ENCODE measurements at regions of chr10 and their contacts with region 1.

Region 1: DNA sequence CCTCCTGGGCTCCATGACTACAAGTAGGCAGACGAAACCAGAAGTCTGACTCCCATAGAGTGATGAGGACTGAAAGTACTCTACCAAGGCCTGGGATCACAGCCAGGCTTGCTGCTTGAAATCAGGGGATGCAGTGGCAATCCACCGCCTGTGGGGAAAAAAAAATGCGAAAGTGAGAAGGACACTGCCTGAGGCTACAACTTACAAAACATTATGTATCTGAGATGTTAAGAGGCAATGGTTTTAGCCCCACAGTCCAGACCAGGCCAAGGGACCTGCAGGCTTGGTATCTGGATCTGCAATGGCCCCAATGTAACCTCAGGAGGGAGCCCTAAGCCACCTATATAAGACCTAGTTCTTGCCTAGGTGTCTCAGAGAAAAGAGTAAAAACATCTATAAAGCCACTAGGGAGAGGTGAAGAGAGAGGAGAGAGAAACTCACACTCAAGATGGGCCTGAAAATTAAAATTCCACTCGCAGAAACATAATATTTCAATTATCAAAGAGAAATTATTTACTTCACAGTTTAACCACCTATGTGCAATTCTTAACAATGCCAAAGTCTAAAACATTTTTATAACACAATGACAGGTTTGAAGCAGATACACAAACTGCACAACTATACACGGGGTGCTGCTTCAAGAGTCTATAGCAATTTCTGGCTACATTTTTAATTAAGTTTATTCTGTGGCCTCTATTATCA is 13.9 kb downstream of the DNAJC1 start:
- DNase-seq: peak in 1 of 3 donors; percentile 6
- H3K4me3 ChIP-seq: no peak overlapping the region
- H3K4me3 Mint-ChIP-seq: no peak overlapping the region
- H3K27ac ChIP-seq: no peak overlapping the region
- H3K27ac Mint-ChIP-seq: peak overlapping the region in 1 of 7 donors; percentile 46
- H3K4me1 ChIP-seq: no peaks in the 10 kb centered on the region
- H3K4me1 Mint-ChIP-seq: peaks cover 6% of the 10 kb centered on the region
- H3K27me3 ChIP-seq: no peaks in the 10 kb centered on the region
- H3K27me3 Mint-ChIP-seq: peaks cover 0 to 2% (median 0%) of the 10 kb centered on the region in 3 donors
- CTCF ChIP-seq: peak; percentile 39

Region 2: DNA sequence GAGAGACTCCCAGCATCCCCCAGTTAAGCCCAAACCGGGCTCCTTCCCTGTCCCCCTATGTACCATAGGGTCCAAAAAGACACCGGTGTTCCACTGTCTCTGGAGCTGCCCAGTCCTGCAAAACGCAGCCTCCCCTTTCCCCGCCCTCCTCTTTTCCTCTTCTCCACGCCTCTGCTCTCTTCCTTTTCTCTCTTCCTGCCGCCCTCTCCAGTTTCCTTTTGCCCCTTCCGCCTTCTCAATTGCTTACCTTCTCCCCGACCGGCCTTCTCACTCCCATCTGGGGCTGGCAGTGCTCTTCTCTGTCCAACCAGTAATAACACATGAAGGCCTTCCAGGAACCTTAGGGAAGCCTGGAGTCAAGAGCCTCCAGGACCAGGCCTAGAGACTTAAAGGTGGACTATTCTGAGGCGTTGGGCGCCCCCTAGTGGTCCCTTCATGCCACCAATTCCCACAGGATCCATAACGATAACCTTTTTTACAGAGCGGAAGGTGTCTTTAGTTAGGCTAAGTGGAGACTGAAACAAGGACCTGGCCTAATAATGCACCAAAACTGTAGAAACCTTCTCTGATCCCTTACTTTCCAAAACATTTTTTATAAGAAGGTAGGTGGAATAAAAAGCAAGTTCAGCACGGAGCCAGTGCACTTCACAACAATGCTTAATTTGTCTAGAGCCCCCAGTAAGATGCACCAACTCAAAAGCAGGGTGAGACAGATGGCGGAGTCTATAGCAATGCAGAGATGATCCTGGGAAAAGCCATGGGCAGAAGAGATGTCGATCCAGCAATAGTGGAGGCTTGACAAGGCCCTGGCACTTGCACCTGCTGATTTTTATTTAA is 1078.6 kb after region 1 on chr10:
- intact Hi-C with region 1: loop called in 1 of 2 experiments (anchors 10 kb)
- DNase-seq: peak; percentile 38 to 65 (median 61)
- H3K4me3 ChIP-seq: no peak overlapping the region
- H3K4me3 Mint-ChIP-seq: no peak overlapping the region
- H3K27ac ChIP-seq: no peak overlapping the region
- H3K27ac Mint-ChIP-seq: no peak overlapping the region
- H3K4me1 ChIP-seq: peaks cover 6 to 22% of the 10 kb centered on the region in 2 donors
- H3K4me1 Mint-ChIP-seq: peaks cover 21% of the 10 kb centered on the region
- H3K27me3 ChIP-seq: no peaks in the 10 kb centered on the region
- H3K27me3 Mint-ChIP-seq: peaks cover 0 to 3% (median 2%) of the 10 kb centered on the region in 3 donors
- CTCF ChIP-seq: peak; percentile 90